Activated B cell treated with CpG ODN at 0.5 μM for 24 hours (primary cell): ENCODE measurements at regions of chr11 and their contacts with region 1.

Region 1: GRCh38 chr11:47213985-47214564 is 699 bp upstream of the DDB2 start:
- DNase-seq: peak; percentile 72
- ATAC-seq: peak; percentile 73
- H3K4me3 Mint-ChIP-seq: peak overlapping the region; percentile 99
- H3K27ac Mint-ChIP-seq: peak overlapping the region; percentile 100
- H3K4me1 Mint-ChIP-seq: peaks cover 35% of the 10 kb centered on the region
- H3K27me3 Mint-ChIP-seq: no peaks in the 10 kb centered on the region
- CTCF ChIP-seq: no peak

Region 2: GRCh38 chr11:46504817-46505613 is 709.1 kb before region 1 on chr11:
- CTCF ChIA-PET with region 1: no interaction called
- POLR2A ChIA-PET with region 1: interaction called, 13 read pairs
- intact Hi-C with region 1: no loop called
- DNase-seq: no peak
- ATAC-seq: no peak
- H3K4me3 Mint-ChIP-seq: no peak overlapping the region
- H3K27ac Mint-ChIP-seq: no peak overlapping the region
- H3K4me1 Mint-ChIP-seq: no peaks in the 10 kb centered on the region
- H3K27me3 Mint-ChIP-seq: no peaks in the 10 kb centered on the region
- CTCF ChIP-seq: no peak

Region 3: GRCh38 chr11:47229161-47229560 is 15.1 kb after region 1 on chr11:
- CTCF ChIA-PET with region 1: no interaction called
- POLR2A ChIA-PET with region 1: interaction called, 31 read pairs
- intact Hi-C with region 1: no loop called
- DNase-seq: no peak
- ATAC-seq: no peak
- H3K4me3 Mint-ChIP-seq: no peak overlapping the region
- H3K27ac Mint-ChIP-seq: no peak overlapping the region
- H3K4me1 Mint-ChIP-seq: peaks cover 8% of the 10 kb centered on the region
- H3K27me3 Mint-ChIP-seq: no peaks in the 10 kb centered on the region
- CTCF ChIP-seq: no peak

Region 4: GRCh38 chr11:47399860-47400767 is 186.0 kb after region 1 on chr11:
- CTCF ChIA-PET with region 1: no interaction called
- POLR2A ChIA-PET with region 1: interaction called, 21 read pairs
- intact Hi-C with region 1: no loop called
- DNase-seq: peak; percentile 56
- ATAC-seq: peak; percentile 79
- H3K4me3 Mint-ChIP-seq: peak overlapping the region; percentile 88
- H3K27ac Mint-ChIP-seq: peak overlapping the region; percentile 95
- H3K4me1 Mint-ChIP-seq: peaks cover 47% of the 10 kb centered on the region
- H3K27me3 Mint-ChIP-seq: no peaks in the 10 kb centered on the region
- CTCF ChIP-seq: no peak

Region 5: DNA sequence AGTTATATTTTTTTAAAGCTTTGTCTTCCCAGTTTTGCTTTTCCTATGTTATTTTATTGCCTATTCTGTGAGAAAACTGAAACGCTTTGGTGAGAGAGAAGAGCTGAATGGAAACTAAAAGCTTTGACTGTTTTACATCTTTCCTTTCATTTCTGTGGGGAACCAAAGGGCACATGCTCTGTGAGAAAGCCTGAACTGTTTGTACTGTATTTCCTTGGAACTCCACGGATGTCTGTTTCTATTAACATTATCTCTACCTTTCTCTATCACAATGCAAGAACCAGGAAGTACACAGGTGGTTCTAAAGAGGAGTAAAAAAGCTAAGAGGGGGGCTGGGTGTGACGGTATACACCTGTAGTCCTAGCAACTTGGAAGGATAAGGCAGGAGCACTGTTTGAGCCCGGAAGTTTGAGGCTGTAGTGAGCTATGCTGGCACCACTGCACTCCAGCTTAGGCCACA is 295.0 kb after region 1 on chr11:
- CTCF ChIA-PET with region 1: no interaction called
- POLR2A ChIA-PET with region 1: no interaction called
- intact Hi-C with region 1: no loop called
- DNase-seq: no peak
- ATAC-seq: no peak
- H3K4me3 Mint-ChIP-seq: peak overlapping the region; percentile 49
- H3K27ac Mint-ChIP-seq: peak overlapping the region; percentile 54
- H3K4me1 Mint-ChIP-seq: peaks cover 83% of the 10 kb centered on the region
- H3K27me3 Mint-ChIP-seq: no peaks in the 10 kb centered on the region
- CTCF ChIP-seq: no peak

Region 6: GRCh38 chr11:47642099-47642855 is 428.2 kb after region 1 on chr11 and contains the start of gene MTCH2:
- CTCF ChIA-PET with region 1: no interaction called
- POLR2A ChIA-PET with region 1: no interaction called
- intact Hi-C with region 1: loop called (anchors 2 kb)
- DNase-seq: peak; percentile 95
- ATAC-seq: peak; percentile 94
- H3K4me3 Mint-ChIP-seq: peak within 1 kb of the TSS; percentile 94
- H3K27ac Mint-ChIP-seq: peak within 1 kb of the TSS; percentile 95
- H3K4me1 Mint-ChIP-seq: peaks cover 25% of the 10 kb centered on the region
- H3K27me3 Mint-ChIP-seq: no peaks in the 10 kb centered on the region
- CTCF ChIP-seq: no peak
- total RNA-seq, gene MTCH2: 73.3 and 81.7 TPM in 2 replicates